Body of pancreas (tissue), 4 donors: ENCODE measurements at regions of chr1 and their contacts with region 1.

Region 1: GRCh38 chr1:12658531-12659453 is 14.9 kb downstream of the AADACL4 start:
- DNase-seq: peak; percentile 72 to 79 (median 75)
- ATAC-seq: peak; percentile 78
- H3K4me3 ChIP-seq: no peak overlapping the region
- H3K27ac ChIP-seq: no peak overlapping the region
- H3K4me1 ChIP-seq: no peaks in the 10 kb centered on the region
- H3K27me3 ChIP-seq: no peaks in the 10 kb centered on the region
- CTCF ChIP-seq: peak; percentile 84 to 96 (median 91)
- POLR2A ChIP-seq: no peak

Region 2: GRCh38 chr1:12314333-12314903 is 344.4 kb before region 1 on chr1:
- intact Hi-C with region 1: loop called (anchors 5 kb)
- DNase-seq: no peak
- ATAC-seq: peak; percentile 67
- H3K4me3 ChIP-seq: no peak overlapping the region
- H3K27ac ChIP-seq: no peak overlapping the region
- H3K4me1 ChIP-seq: no peaks in the 10 kb centered on the region
- H3K27me3 ChIP-seq: no peaks in the 10 kb centered on the region
- CTCF ChIP-seq: peak in 6 of 7 experiments; percentile 36 to 71 (median 66)
- POLR2A ChIP-seq: no peak